Mucosa of descending colon (tissue), 3 donors: ENCODE measurements at regions of chr3 and their contacts with region 1.

Region 1: GRCh38 chr3:49539659-49540560 is 14.4 kb upstream of the BSN start:
- DNase-seq: peak; percentile 94 to 96 (median 95)
- ATAC-seq: peak; percentile 98
- H3K4me3 ChIP-seq: peak overlapping the region; percentile 4
- H3K4me1 ChIP-seq: peaks cover 7% of the 10 kb centered on the region
- CTCF ChIP-seq: peak; percentile 72

Region 2: DNA sequence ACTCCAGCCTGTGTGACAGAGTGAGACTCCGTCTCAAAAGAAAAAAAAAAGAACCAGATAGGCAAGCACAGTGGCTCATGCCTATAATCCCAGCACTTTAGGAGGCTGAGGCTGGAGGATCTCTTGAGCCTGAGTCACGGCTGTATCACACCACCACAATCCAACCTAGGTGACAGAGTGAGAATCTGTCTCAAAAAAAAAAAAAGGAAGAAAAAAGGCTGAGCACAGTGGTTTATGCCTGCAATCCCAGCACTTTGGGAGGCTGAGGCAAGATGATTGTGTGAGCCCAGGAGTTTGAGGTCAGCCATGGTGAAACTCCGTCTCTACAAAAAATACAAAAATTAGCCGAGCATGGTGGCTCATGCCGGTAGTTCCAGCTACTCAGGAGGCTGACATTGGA is 105.2 kb before region 1 on chr3:
- intact Hi-C with region 1: no loop called
- DNase-seq: no peak
- ATAC-seq: no peak
- H3K4me3 ChIP-seq: no peak overlapping the region
- H3K4me1 ChIP-seq: no peaks in the 10 kb centered on the region
- CTCF ChIP-seq: no peak

Region 3: DNA sequence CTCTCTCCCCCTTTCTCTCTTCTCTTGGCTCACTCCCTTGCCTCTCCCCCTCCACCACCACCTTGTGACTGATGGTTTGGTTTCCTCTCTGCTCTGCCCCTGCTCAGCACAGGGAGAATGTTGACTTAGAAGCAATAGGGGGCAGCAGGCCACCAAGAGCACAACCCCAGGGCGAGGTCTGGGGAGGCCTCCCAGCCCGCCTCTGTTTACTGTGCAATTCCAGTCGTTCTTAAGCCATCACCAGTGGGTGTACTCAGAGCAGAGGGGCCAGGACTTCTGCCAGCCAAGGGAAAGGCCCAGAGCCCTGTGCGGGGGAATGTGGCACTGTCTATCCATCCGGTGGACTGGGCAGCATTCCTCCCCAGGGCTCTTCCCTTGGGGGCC is 128.5 kb after region 1 on chr3:
- intact Hi-C with region 1: loop called (anchors 5 kb)
- DNase-seq: no peak
- ATAC-seq: no peak
- H3K4me3 ChIP-seq: no peak overlapping the region
- H3K4me1 ChIP-seq: peaks cover 5% of the 10 kb centered on the region
- CTCF ChIP-seq: no peak

Region 4: GRCh38 chr3:49673715-49674496 is 134.0 kb after region 1 on chr3 and contains the start of gene APEH:
- intact Hi-C with region 1: loop called (anchors 5 kb)
- DNase-seq: peak; percentile 97 to 99 (median 98)
- ATAC-seq: peak; percentile 93
- H3K4me3 ChIP-seq: peak within 1 kb of the TSS; percentile 85
- H3K4me1 ChIP-seq: peaks cover 13% of the 10 kb centered on the region
- CTCF ChIP-seq: no peak
- total RNA-seq, gene APEH: 110 to 176 (median 142) TPM